ENCODE measurements at regions of chr13 and their contacts with region 1.

Region 1: GRCh38 chr13:48562296-48563066 is 29.6 kb upstream of the RCBTB2 start:
- DNase-seq: peak; percentile 33 to 92
- ATAC-seq: peak; percentile 85 to 99 (median 98)
- H3K4me3 ChIP-seq: no peak overlapping the region
- H3K4me3 Mint-ChIP-seq: peak overlapping the region; percentile 80
- H3K27ac ChIP-seq: peak overlapping the region; percentile 42
- H3K27ac Mint-ChIP-seq: peak overlapping the region; percentile 52 to 68
- H3K4me1 ChIP-seq: peaks cover 16% of the 10 kb centered on the region
- H3K4me1 Mint-ChIP-seq: peaks cover 54 to 61% of the 10 kb centered on the region in 2 donors
- H3K27me3 ChIP-seq: no peaks in the 10 kb centered on the region
- H3K27me3 Mint-ChIP-seq: peaks cover 6 to 25% of the 10 kb centered on the region in 2 donors
- CTCF ChIP-seq: no peak

Region 2: GRCh38 chr13:48505597-48506091 is 56.8 kb before region 1 on chr13:
- intact Hi-C with region 1: loop called (anchors 1 kb)
- DNase-seq: peak in 1 of 2 donors; percentile 91
- ATAC-seq: peak; percentile 17 to 65 (median 50)
- H3K4me3 ChIP-seq: no peak overlapping the region
- H3K4me3 Mint-ChIP-seq: peak overlapping the region; percentile 85
- H3K27ac ChIP-seq: peak overlapping the region; percentile 80
- H3K27ac Mint-ChIP-seq: peak overlapping the region; percentile 91 to 97
- H3K4me1 ChIP-seq: peaks cover 48% of the 10 kb centered on the region
- H3K4me1 Mint-ChIP-seq: peaks cover 57 to 75% of the 10 kb centered on the region in 2 donors
- H3K27me3 ChIP-seq: no peaks in the 10 kb centered on the region
- H3K27me3 Mint-ChIP-seq: no peaks in the 10 kb centered on the region
- CTCF ChIP-seq: no peak

Region 3: GRCh38 chr13:48532506-48533499 is 29.7 kb before region 1 on chr13 and contains the start of gene RCBTB2:
- intact Hi-C with region 1: loop called (anchors 1 kb)
- DNase-seq: peak; percentile 98 to 100
- ATAC-seq: peak; percentile 84 to 95 (median 87)
- H3K4me3 ChIP-seq: peak within 1 kb of the TSS; percentile 84
- H3K4me3 Mint-ChIP-seq: peak within 1 kb of the TSS; percentile 96
- H3K27ac ChIP-seq: peak within 1 kb of the TSS; percentile 96
- H3K27ac Mint-ChIP-seq: peak within 1 kb of the TSS; percentile 96 to 98
- H3K4me1 ChIP-seq: peaks cover 16% of the 10 kb centered on the region
- H3K4me1 Mint-ChIP-seq: peaks cover 45 to 50% of the 10 kb centered on the region in 2 donors
- H3K27me3 ChIP-seq: no peaks in the 10 kb centered on the region
- H3K27me3 Mint-ChIP-seq: no peaks in the 10 kb centered on the region
- CTCF ChIP-seq: no peak
- total RNA-seq, gene RCBTB2: 21.9 to 27.1 (median 24.2) TPM